Activated T-helper 1 cell treated with anti-CD3 and anti-CD28 coated beads, Interleukin-12 subunit alpha, Interleukin-12 subunit beta, Interleukin-2, Interleukin-4 antibody, amounts not matched to agents 30 ng/mL and 10 ng/mL and 1 ng/mL, durations not matched to agents 14 hours and 24 hours and 36 hours (primary cell): ENCODE measurements at regions of chr6 and their contacts with region 1.

Region 1: GRCh38 chr6:18488526-18489270 is 101.5 kb downstream of the RNF144B start:
- DNase-seq: no peak
- H3K4me3 Mint-ChIP-seq: no peak overlapping the region
- H3K27ac Mint-ChIP-seq: no peak overlapping the region
- H3K4me1 Mint-ChIP-seq: peaks cover 12% of the 10 kb centered on the region
- H3K27me3 Mint-ChIP-seq: peaks cover 13% of the 10 kb centered on the region

Region 2: DNA sequence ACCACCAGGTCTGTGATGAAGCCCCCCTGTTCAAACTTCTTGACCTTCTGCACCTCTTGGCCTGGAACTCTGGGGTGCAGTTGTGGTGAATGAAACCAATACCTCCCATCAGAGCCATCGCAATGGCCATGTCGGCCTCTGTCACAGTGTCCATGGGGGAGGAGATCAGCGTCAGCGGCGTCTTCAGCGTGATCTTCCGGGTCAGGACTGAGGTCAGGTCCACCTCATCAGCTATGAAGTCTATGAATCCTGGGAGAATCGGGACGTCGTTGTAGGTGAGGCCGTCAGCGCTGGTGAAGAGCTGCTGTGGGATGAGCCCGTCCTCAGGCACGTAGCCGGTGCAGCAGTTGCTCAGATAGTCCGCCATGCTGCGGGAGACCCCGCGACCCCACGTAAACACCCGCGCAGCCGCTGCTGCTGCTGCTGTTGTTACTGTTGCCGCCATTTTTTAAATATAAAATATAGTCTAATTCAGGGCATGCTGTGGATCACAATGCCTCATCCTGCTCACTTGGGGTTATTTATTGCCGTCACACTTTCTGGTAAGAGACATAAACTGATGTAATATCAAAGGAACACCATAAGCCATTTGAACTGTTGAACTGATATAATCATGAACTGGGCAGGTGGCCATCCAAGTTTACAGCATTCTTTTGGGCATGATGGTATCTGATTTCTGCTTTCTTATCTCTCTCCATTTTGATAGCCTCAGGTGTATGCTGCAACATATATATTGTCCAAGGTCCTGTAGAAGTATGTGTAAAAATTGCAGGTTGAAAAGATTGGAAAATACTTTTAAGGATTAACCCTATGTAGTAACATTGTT is 120.2 kb before region 1 on chr6:
- intact Hi-C with region 1: no loop called
- DNase-seq: no peak
- H3K4me3 Mint-ChIP-seq: no peak overlapping the region
- H3K27ac Mint-ChIP-seq: no peak overlapping the region
- H3K4me1 Mint-ChIP-seq: no peaks in the 10 kb centered on the region
- H3K27me3 Mint-ChIP-seq: no peaks in the 10 kb centered on the region

Region 3: DNA sequence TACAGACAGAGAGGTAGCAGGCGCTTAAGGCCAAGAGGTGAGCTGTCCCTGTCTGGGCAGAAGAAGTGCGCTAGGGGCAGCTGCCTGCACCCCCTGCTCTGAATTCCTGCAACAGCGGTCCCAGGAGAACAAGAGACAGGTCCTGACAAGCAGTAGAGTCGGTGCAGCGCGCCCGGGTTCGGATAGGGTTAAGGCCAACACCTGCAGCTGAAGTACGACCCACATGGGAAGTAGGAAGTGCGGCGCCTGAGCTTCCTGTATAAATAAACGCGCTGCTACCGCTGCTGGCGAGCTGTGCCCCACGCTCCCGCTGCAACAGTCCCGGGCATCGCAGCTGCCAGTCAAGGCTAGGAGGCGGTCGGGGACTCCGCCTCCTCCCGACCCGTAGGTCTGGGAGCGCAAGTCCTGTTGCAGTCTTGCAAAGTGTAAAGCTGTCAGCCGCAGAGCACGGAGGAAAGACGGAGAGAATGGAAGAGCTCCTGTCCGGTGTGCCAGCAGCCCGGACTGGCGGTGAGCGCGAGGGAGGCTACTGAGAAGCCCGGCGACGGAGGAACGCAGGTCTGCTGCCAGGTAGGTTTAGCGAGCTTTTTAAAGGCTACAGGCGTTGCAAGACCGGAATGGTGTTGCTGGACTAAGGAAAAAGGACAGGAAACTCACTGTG is 101.5 kb before region 1 on chr6 and contains the start of gene RNF144B:
- intact Hi-C with region 1: loop called (anchors 5 kb)
- DNase-seq: peak; percentile 32
- H3K4me3 Mint-ChIP-seq: peak within 1 kb of the TSS; percentile 94
- H3K27ac Mint-ChIP-seq: no peak within 1 kb of the TSS
- H3K4me1 Mint-ChIP-seq: peaks cover 23% of the 10 kb centered on the region
- H3K27me3 Mint-ChIP-seq: peaks cover 22% of the 10 kb centered on the region
- total RNA-seq, gene RNF144B: 0.44 and 0.86 TPM in 2 replicates